ENCODE measurements at regions of chr18 and their contacts with region 1.

Region 1: DNA sequence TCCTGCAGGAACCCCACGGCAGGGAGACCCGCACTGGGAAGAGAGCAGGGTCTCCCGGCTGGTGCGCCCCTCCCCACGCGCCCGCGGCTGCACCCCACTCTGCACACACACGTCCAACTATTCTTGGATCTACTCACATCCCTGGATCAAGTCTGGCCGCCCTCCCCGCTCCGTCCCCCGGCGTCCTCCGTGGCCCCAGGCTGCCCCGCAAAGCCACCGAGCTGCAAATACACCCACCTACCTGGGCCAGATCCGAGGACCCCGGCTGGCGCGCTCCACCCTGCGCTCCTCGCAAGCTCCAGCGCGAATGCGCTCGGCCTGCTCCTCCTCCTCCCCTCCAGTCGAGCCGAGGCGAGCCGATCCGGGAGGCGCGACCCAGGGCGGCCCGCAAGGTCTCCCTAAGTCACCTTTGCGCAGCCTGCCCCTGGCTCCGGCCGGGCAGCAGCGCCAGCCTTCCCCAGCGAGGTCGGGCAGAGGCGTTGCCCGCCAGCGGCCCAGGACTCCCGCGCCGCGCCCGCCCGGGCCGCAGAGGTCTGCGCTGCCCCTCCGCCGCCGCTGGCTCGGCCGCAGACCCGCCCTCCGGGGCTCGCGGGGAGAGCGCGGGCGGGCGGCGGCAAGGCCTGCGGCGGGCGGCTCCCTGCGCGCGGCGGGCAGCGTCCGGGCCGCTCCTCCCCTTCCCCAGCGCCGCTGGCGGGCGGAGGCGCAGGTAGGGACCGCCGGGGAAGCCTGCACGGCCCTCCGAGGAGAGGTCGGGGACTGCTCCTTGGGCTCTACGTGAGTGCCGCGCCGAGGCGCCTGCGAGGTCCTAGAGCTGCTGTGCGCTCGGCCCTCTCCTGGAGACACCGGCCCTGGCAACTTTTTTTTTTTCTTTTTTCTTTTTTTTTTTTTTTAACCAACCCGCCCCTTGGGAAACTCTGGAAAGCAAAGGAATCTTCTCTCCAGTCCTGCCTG is 126.0 kb downstream of the OSBPL1A start:
- DNase-seq: peak; percentile 76 to 85 (median 81)
- ATAC-seq: peak; percentile 86
- H3K4me3 ChIP-seq: peak overlapping the region; percentile 47 to 58
- H3K27ac ChIP-seq: peak overlapping the region; percentile 71 to 91 (median 82)
- H3K4me1 ChIP-seq: peaks cover 11% of the 10 kb centered on the region
- H3K27me3 ChIP-seq: no peaks in the 10 kb centered on the region
- CTCF ChIP-seq: peak in 6 of 7 experiments; percentile 13 to 66 (median 34)
- POLR2A ChIP-seq: peak; percentile 32 to 52 (median 46)

Region 2: GRCh38 chr18:24189007-24189528 is 82.6 kb before region 1 on chr18:
- intact Hi-C with region 1: loop called (anchors 10 kb)
- DNase-seq: no peak
- ATAC-seq: no peak
- H3K4me3 ChIP-seq: no peak overlapping the region
- H3K27ac ChIP-seq: no peak overlapping the region
- H3K4me1 ChIP-seq: no peaks in the 10 kb centered on the region
- H3K27me3 ChIP-seq: no peaks in the 10 kb centered on the region
- CTCF ChIP-seq: no peak
- POLR2A ChIP-seq: no peak

Region 3: DNA sequence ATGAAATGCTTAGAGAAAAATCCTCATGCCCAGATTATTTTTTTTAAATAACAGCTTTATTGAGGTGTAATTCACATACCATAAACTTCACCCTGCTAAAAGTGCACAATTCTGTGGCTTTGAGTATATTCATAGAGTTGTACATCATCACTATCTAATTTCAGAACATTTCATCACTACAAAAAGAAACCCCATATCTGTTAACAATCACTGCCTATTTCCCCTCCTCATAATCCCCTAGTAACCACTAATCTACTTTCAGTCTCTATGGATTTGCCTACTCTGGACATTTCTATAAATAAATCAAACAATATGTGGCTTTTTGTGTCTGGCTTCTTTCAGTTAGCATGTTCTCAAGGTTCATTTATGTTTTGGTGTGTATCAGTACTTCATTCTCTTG is 74.6 kb after region 1 on chr18:
- intact Hi-C with region 1: no loop called
- DNase-seq: no peak
- ATAC-seq: no peak
- H3K4me3 ChIP-seq: no peak overlapping the region
- H3K27ac ChIP-seq: no peak overlapping the region
- H3K4me1 ChIP-seq: no peaks in the 10 kb centered on the region
- H3K27me3 ChIP-seq: no peaks in the 10 kb centered on the region
- CTCF ChIP-seq: no peak
- POLR2A ChIP-seq: no peak